ENCODE measurements at regions of chr22 and their contacts with region 1.

Region 1: DNA sequence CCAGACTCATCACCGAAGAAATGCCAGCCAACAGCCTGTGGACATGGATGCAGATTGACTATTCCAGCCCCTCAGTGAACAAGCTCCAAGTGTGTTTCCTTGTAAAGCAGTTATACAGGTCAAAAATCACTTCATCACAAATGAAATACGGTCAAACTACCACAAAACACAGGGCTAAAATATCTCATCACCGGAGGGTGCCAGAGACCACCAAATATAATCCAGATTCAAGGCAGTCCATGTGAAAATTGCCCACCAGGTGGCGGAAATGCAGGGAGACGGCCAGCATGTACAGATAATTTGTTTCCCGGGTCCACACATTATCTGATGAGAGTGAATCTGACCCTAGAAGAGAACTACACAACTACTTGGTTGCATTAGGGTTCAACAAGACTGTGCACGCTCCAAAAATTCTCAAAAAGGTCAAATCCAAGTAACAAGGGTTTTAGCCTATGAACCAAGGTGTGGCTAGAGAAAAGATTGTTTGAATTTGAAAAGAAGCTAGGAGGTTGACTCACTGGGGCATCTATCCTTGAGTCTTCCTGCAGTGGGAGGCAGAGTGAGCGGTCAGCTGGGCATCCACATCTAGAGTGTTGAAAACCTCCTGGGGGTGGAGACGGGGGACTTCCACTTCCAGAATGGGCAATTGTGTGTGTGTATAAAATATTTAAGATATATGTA is 71.7 kb downstream of the IGLL5 start:
- DNase-seq: peak; percentile 70
- ATAC-seq: peak; percentile 78

Region 2: DNA sequence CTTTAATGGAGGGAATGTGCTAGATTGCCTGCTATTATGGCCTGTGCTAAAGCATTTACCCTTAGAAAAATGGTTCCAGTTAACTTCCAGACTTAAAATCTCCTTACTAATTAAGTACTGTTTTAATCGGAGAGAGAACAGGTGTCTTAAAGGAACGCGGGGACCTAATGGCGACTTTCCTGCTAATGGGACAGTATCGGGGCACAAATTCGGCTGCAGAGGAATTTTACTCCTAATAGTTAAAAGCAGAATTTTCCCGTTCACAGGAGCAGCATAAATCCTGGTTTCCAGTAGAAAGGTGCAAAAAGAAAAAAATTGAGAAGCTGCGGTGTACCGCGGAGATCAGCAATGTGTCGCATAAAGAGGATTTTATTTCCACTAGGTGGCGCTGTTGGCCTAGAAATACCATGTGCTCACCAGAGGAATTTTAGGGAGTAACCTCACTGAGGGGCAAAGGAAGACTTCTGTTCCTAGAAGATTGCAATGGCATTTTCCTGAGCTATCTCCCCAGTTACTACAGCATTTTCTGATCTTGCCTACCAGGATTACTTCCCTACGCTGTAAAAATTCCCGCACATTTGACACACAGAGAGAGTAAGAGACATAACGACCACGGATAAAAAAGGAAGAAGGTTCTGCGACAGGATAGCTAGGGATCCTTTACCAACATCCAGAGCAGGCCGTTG is 495.3 kb before region 1 on chr22:
- intact Hi-C with region 1: loop called (anchors 5 kb)
- DNase-seq: no peak
- ATAC-seq: peak; percentile 79

Region 3: GRCh38 chr22:22848364-22848866 is 110.9 kb before region 1 on chr22:
- intact Hi-C with region 1: loop called (anchors 5 kb)
- DNase-seq: peak; percentile 70
- ATAC-seq: peak; percentile 67

Region 4: GRCh38 chr22:22855617-22856308 is 103.5 kb before region 1 on chr22:
- intact Hi-C with region 1: loop called (anchors 5 kb)
- DNase-seq: peak; percentile 50
- ATAC-seq: no peak

Region 5: GRCh38 chr22:23012081-23012622 is 52.9 kb after region 1 on chr22:
- intact Hi-C with region 1: no loop called
- DNase-seq: no peak
- ATAC-seq: no peak

Region 6: DNA sequence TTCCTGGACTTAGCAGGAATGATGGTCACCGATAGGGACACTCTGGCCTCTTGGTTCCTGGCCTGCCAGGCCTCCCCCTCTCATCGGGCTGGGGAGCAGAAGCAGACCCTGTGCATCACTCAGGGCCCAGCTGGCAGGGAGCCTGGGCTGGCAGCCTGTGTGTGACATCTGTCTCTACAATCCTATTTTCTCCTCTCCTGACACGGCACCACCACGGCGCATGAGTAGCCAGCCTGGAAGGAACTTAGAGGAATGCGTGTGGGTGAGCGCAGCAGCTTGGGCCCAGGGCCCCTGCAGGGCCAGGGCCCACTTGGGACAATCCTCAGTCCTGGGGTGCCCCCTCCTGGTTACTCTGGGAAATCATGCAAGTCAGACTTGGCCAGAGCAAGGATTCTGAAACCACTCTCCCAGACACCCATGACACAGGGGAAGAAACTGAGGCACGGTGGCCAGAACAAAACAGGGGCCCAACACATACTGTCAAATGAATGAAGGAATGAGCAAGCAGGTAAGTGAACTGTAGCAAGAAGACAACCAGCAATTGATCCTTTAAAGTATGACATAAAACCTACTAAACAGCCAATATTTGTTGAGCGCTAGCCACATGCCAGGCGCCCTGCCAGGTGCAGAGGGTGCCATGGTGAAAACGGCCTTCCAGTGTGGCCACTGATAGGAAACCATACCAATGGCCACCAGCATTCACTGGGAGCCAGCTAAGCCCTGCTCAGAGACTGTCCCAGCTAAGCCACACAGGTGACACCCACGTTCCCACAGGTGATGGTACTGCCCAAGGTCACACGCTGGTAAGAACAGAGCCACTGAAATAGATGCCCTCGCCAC is 169.2 kb after region 1 on chr22:
- intact Hi-C with region 1: loop called (anchors 2 kb)
- DNase-seq: peak; percentile 69
- ATAC-seq: peak; percentile 93

Region 7: GRCh38 chr22:23281406-23282088 is 322.3 kb after region 1 on chr22:
- intact Hi-C with region 1: loop called (anchors 10 kb)
- DNase-seq: peak; percentile 91
- ATAC-seq: peak; percentile 84

Region 8: DNA sequence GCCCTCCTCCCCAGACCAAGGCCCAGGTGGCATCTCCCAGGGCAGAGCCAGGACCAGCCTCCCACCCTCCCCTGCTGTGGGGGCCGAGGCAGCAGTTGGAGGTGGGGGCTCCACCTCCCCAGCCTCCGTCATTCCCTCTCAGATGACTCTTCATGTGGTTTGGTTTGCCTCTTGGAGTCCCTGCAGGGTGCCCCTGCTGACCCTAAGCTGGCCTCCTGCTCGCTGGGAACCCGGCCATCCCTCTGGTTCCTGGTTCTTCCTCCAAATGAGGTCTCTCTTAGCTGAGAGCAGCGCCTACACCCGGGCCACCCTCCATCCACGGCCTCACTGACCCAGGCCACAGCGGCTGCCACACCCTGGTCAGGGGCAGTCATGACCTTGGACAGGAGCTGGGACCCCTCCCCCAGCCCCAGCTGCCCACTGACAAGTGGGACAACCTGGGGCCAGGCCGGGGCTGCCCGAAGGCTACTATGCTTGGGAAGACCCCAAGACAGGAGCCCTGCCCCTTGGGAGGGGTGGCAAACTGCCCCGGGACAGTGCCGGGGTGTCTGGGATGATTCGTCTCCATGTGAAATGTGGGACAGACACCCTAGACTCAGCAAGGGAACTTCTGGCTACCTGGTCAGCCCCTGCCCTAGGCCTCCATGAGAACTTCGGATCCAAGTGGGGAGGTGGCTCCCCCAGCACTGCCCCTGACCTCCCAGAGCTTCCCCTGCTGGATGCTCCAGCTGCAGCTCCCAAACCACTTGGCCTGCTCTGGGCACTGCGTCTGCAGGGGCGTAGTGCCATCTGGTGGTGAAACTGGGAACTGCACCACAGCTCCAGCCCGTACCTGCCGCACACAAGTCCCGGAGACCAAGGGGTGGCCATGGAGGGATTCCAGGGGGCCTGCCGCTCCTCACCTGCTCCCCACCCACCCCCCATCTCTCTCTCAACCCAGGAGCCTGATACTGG is 426.3 kb after region 1 on chr22:
- intact Hi-C with region 1: loop called (anchors 10 kb)
- DNase-seq: peak; percentile 89
- ATAC-seq: peak; percentile 90